Naive thymus-derived CD4-positive, alpha-beta T cell (primary cell): ENCODE measurements at regions of chr22 and their contacts with region 1.

Region 1: DNA sequence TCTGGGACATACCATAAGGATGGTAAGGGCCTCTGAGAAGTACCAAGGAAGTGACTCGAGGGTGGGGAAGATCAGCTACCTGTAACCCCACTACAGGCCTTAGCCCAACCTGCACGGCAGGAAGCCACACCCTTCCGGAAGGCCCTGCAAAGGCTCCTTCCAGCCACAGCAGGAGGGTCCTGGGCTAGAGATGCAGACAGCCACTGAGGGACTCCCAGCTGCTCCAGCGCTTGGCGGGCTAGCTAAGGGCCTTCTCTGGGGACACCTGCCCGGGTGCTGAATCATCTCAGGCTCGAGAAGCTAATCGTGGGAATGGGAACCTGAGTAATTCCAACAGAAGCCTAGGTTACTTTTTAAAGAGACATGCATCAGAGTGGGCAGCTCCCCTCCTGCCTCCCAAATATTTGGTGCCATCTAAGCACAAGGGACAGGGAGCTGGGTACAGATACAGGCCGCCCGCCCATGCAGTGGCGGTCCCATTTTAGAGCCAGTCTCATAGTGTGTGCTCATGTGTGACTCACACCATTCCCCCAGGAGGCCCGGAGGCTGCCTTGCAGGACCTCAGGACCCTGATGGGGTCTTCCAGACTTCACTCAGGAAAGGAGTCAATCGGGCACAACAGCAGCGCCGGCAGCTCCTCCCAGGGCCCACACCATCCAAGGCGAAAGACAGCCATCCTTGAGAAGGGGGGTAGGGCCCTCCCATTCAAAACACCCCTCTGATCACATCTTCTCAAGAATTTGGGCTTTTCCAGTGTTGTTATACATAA is 8.0 kb downstream of the MYH9 start:
- DNase-seq: peak in 7 of 9 donors; percentile 59 to 68 (median 63)
- ATAC-seq: peak; percentile 56
- H3K4me3 ChIP-seq: peak overlapping the region; percentile 47
- H3K4me3 Mint-ChIP-seq: peak overlapping the region; percentile 80 to 92 (median 88)
- H3K27ac ChIP-seq: peak overlapping the region; percentile 80
- H3K27ac Mint-ChIP-seq: peak overlapping the region; percentile 95 to 100 (median 98)
- H3K4me1 ChIP-seq: peaks cover 84% of the 10 kb centered on the region in 2 donors
- H3K4me1 Mint-ChIP-seq: peaks cover 41 to 95% (median 89%) of the 10 kb centered on the region in 7 donors
- H3K27me3 ChIP-seq: no peaks in the 10 kb centered on the region
- H3K27me3 Mint-ChIP-seq: no peaks in the 10 kb centered on the region

Region 2: DNA sequence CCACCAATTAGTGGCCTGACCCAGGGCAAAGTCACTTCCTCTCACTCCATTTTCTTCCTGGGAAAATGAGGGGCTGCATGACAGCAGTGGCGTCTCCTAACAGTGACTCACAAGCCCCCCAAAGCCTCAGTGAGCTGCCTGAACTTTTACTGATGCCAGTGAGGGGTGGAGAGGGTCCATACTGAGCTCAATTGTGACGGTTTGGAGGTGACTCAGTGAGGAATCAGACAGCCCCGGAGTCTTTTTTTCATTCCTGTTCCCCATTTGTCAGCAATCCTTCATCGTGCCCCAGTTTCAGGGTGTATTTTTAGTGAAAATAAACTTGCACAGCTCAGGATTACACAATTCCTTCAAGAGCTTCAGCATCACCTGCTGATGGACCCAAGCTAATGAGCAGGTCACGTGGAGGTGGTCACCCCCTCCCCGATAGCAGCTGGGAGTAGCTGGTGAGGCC is 869.3 kb before region 1 on chr22:
- CTCF ChIA-PET with region 1: no interaction called
- POLR2A ChIA-PET with region 1: no interaction called
- intact Hi-C with region 1: no loop called
- DNase-seq: no peak
- ATAC-seq: no peak
- H3K4me3 ChIP-seq: no peak overlapping the region
- H3K4me3 Mint-ChIP-seq: no peak overlapping the region
- H3K27ac ChIP-seq: no peak overlapping the region
- H3K27ac Mint-ChIP-seq: no peak overlapping the region
- H3K4me1 ChIP-seq: no peaks in the 10 kb centered on the region
- H3K4me1 Mint-ChIP-seq: peaks cover 0 to 1% (median 0%) of the 10 kb centered on the region in 7 donors
- H3K27me3 ChIP-seq: no peaks in the 10 kb centered on the region
- H3K27me3 Mint-ChIP-seq: peaks cover 0 to 25% (median 10%) of the 10 kb centered on the region in 5 donors

Region 3: DNA sequence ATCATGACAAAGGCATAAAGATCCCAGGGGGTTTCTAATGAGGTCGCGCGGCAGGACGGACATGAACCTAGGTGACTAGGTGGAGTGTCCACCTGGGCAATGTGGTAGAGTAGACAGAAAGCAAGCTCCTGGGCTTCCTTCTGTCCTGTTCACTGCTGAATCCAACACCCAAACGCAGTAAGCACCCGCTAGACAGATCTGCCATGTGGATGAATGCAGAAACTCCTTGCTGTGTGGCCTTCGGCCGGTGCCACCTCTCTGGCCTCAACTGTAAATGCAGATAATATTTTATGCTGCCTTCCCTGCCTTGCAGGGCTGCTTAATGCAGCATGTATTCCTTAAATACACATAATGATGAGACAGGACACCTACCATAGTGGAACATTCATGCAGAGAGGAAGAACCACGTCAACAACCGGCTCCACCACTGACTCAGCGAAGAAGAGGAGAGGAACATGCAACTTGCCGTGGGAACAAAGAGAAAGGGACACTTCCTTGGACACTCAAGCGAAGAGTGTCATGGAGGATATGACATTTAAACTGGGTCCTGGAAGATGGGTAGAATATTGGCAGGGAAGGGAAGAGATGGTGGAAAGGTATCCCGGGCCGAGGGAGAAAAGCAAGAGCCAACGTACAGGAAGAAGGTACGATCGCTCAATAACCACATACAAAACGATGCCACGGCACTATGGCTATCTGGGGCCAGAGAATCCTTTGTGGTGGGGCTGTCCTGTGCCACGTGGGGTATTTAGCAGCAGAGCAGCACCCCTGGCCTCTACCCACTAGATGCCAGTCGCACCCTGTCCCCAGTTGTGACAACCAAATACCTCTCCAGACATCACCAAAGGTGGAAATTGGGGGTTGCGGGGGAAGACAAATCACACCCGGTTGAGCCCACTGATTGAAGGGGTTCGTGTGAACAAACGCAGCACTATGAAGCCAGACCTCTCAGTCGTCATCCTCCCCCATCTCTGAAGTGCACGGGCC is 22.8 kb before region 1 on chr22:
- CTCF ChIA-PET with region 1: interaction called, 9 read pairs
- POLR2A ChIA-PET with region 1: interaction called, 1,512 read pairs
- intact Hi-C with region 1: loop called in 1 of 2 experiments (anchors 1 kb)
- DNase-seq: peak in 3 of 9 donors; percentile 44 to 64 (median 55)
- ATAC-seq: peak; percentile 52
- H3K4me3 ChIP-seq: peak overlapping the region; percentile 39
- H3K4me3 Mint-ChIP-seq: peak overlapping the region; percentile 75 to 89 (median 83)
- H3K27ac ChIP-seq: peak overlapping the region; percentile 57
- H3K27ac Mint-ChIP-seq: peak overlapping the region; percentile 82 to 98 (median 94)
- H3K4me1 ChIP-seq: peaks cover 94 to 96% of the 10 kb centered on the region in 2 donors
- H3K4me1 Mint-ChIP-seq: peaks cover 69 to 100% (median 94%) of the 10 kb centered on the region in 7 donors
- H3K27me3 ChIP-seq: no peaks in the 10 kb centered on the region
- H3K27me3 Mint-ChIP-seq: no peaks in the 10 kb centered on the region

Region 4: GRCh38 chr22:36365020-36365411 is 14.8 kb before region 1 on chr22:
- CTCF ChIA-PET with region 1: interaction called, 6 read pairs
- POLR2A ChIA-PET with region 1: interaction called, 1,512 read pairs
- intact Hi-C with region 1: loop called (anchors 1 kb)
- DNase-seq: peak; percentile 55 to 98 (median 83)
- ATAC-seq: peak; percentile 97
- H3K4me3 ChIP-seq: no peak overlapping the region
- H3K4me3 Mint-ChIP-seq: peak overlapping the region; percentile 58 to 88 (median 82)
- H3K27ac ChIP-seq: peak overlapping the region; percentile 93
- H3K27ac Mint-ChIP-seq: peak overlapping the region; percentile 91 to 98 (median 96)
- H3K4me1 ChIP-seq: peaks cover 97 to 98% of the 10 kb centered on the region in 2 donors
- H3K4me1 Mint-ChIP-seq: peaks cover 73 to 100% (median 95%) of the 10 kb centered on the region in 7 donors
- H3K27me3 ChIP-seq: no peaks in the 10 kb centered on the region
- H3K27me3 Mint-ChIP-seq: no peaks in the 10 kb centered on the region

Region 5: GRCh38 chr22:37098976-37099591 is 719.3 kb after region 1 on chr22:
- CTCF ChIA-PET with region 1: no interaction called
- POLR2A ChIA-PET with region 1: no interaction called
- intact Hi-C with region 1: no loop called
- DNase-seq: no peak
- ATAC-seq: peak; percentile 48
- H3K4me3 ChIP-seq: no peak overlapping the region
- H3K4me3 Mint-ChIP-seq: no peak overlapping the region
- H3K27ac ChIP-seq: no peak overlapping the region
- H3K27ac Mint-ChIP-seq: peak overlapping the region in 5 of 9 donors; percentile 2 to 68 (median 41)
- H3K4me1 ChIP-seq: no peaks in the 10 kb centered on the region
- H3K4me1 Mint-ChIP-seq: peaks cover 0 to 38% (median 10%) of the 10 kb centered on the region in 7 donors
- H3K27me3 ChIP-seq: no peaks in the 10 kb centered on the region
- H3K27me3 Mint-ChIP-seq: peaks cover 0 to 27% (median 12%) of the 10 kb centered on the region in 5 donors